OCI-LY7 (cell line): ENCODE measurements at regions of chr22 and their contacts with region 1.

Region 1: GRCh38 chr22:46122511-46122971 is 27.8 kb upstream of the PPARA start:
- DNase-seq: peak; percentile 73
- H3K4me3 ChIP-seq: no peak overlapping the region
- H3K27ac ChIP-seq: no peak overlapping the region
- H3K4me1 ChIP-seq: no peaks in the 10 kb centered on the region
- CTCF ChIP-seq: peak; percentile 95

Region 2: DNA sequence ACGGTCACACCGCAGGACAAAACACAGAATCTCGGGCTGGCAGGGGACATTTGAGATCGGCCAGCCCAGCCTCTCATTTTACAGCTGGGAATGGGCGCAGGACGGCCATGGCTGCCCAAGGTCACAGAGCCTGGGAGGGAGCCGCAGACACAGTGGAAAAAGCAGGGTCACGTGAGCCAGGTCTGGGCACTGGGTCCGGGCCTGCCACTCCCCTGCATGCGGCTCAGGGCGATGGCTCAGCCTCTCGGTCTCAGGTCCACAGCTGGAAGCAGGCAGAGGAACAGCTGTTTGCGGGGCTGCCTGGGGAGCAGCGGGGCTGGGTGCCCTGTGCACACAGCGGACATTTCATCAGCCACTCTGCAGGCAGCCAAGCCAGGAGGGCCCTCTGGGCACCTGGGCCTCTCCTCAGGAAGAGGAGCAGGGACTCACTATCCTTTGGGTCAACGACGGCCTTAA is 17.4 kb after region 1 on chr22:
- CTCF ChIA-PET with region 1: no interaction called
- POLR2A ChIA-PET with region 1: no interaction called
- intact Hi-C with region 1: no loop called
- DNase-seq: no peak
- H3K4me3 ChIP-seq: no peak overlapping the region
- H3K27ac ChIP-seq: no peak overlapping the region
- H3K4me1 ChIP-seq: peaks cover 4% of the 10 kb centered on the region
- CTCF ChIP-seq: no peak

Region 3: GRCh38 chr22:46175631-46176030 is 53.1 kb after region 1 on chr22:
- CTCF ChIA-PET with region 1: no interaction called
- POLR2A ChIA-PET with region 1: no interaction called
- intact Hi-C with region 1: no loop called
- DNase-seq: no peak
- H3K4me3 ChIP-seq: no peak overlapping the region
- H3K27ac ChIP-seq: no peak overlapping the region
- H3K4me1 ChIP-seq: no peaks in the 10 kb centered on the region
- CTCF ChIP-seq: no peak

Region 4: DNA sequence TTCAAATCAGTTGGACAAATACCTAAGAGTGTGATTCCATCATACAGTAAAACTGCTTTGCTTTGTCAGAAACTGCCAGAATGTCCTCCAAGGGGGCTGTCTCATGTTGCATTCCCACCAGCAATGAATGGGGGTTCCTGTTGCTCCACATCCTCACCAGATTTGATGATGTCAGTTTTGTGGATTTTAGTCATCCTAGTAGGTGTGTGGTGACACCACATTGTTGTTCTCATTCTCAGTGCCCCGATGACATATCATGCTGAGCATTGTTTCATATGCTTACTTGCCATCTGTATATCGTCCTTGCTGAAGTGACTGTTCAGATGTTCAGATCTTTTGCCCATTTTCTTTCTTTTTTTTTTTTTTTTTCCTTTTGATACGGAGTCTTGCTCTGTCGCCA is 90.5 kb after region 1 on chr22:
- CTCF ChIA-PET with region 1: no interaction called
- POLR2A ChIA-PET with region 1: no interaction called
- intact Hi-C with region 1: no loop called
- DNase-seq: no peak
- H3K4me3 ChIP-seq: no peak overlapping the region
- H3K27ac ChIP-seq: no peak overlapping the region
- H3K4me1 ChIP-seq: no peaks in the 10 kb centered on the region
- CTCF ChIP-seq: no peak

Region 5: GRCh38 chr22:46296257-46297150 is 174.0 kb after region 1 on chr22 and contains the start of gene GTSE1:
- CTCF ChIA-PET with region 1: no interaction called
- POLR2A ChIA-PET with region 1: no interaction called
- intact Hi-C with region 1: loop called (anchors 5 kb)
- DNase-seq: peak; percentile 99
- H3K4me3 ChIP-seq: peak within 1 kb of the TSS; percentile 95
- H3K27ac ChIP-seq: peak within 1 kb of the TSS; percentile 87
- H3K4me1 ChIP-seq: peaks cover 49% of the 10 kb centered on the region
- CTCF ChIP-seq: peak; percentile 38; the same call in 1 of the 2 replicates
- total RNA-seq, gene GTSE1: 54.7 and 56.0 TPM in 2 replicates

Region 6: DNA sequence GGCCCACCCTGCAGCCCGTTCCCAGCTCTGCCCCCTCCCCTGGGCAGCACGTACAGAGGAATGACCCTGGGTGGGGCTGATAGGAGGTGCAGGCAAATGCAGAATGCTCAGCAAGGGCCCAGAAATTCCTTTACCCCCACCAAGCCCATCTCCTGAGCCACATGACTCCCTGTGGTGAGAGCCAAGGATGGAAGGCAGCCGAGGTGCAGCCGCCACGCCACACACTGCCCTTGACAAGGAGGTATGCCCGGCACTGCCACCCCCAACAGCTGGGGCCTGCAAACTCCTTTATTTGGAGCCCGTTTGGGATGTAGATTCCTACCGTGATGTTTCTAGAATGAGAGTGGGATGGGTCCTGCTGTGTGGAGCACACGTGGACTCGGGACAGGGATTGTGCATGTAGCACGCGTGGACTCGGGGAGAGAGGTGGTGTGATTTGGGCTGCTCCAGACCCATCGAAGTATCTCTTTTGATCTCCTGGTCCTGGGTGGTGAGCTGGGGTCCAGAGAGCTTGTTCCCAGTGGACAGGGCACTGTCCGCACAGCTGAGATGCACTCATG is 187.1 kb after region 1 on chr22:
- CTCF ChIA-PET with region 1: interaction called, 4 read pairs
- POLR2A ChIA-PET with region 1: no interaction called
- intact Hi-C with region 1: loop called (anchors 1 kb)
- DNase-seq: no peak
- H3K4me3 ChIP-seq: no peak overlapping the region
- H3K27ac ChIP-seq: no peak overlapping the region
- H3K4me1 ChIP-seq: no peaks in the 10 kb centered on the region
- CTCF ChIP-seq: no peak

Region 7: DNA sequence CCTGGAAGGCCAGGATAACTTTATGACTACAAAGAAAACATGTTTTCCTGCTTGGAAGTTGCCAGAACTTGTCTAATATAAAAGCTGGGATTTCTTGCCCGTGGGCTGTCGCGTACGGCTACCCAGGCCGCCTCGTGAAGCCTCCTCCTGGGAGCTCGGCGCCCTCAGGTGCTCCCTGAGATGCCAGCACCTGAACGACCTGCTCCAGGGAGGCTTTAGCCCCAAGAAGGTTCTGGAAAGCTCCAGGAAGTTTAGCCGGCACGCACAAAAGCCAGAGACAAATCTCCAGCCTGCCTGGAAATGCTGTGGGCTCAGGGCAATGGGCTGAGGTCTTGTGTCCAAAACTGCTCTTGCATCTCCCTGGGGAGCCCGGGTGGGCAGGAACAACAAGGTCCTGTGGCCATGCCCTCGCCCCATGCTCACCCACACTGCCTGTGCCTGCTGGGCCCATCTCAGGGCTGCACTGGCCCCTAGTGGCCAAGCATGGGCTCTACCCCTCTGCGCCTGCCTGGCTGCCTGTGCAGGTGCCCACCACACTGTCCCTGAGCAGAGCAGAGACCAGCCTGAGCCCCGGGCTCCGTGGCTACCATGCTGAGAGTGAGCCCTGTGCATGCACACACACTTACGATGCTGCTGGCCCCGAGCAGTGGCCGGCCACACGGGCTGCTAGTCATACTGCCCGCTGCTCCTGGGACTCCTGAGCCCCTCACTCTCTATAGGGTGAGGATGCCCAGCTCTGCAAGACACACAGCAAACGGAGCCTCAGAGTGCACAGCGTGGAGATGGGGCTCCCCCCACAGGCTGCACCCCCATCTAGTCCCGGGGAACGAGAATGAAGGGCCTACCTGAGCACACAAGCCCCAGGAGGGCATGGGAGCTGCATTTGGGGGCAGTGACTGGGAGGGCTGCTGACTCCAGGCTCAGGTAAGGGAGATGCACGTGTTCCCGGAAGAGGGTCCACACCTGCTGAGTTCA is 419.8 kb after region 1 on chr22:
- CTCF ChIA-PET with region 1: no interaction called
- POLR2A ChIA-PET with region 1: no interaction called
- intact Hi-C with region 1: loop called (anchors 1 kb)
- DNase-seq: peak; percentile 71
- H3K4me3 ChIP-seq: no peak overlapping the region
- H3K27ac ChIP-seq: no peak overlapping the region
- H3K4me1 ChIP-seq: no peaks in the 10 kb centered on the region
- CTCF ChIP-seq: peak; percentile 90